Activated naive CD4-positive, alpha-beta T cell treated with anti-CD3 and anti-CD28 coated beads for 36 hours (primary cell): ENCODE measurements at regions of chr11 and their contacts with region 1.

Region 1: DNA sequence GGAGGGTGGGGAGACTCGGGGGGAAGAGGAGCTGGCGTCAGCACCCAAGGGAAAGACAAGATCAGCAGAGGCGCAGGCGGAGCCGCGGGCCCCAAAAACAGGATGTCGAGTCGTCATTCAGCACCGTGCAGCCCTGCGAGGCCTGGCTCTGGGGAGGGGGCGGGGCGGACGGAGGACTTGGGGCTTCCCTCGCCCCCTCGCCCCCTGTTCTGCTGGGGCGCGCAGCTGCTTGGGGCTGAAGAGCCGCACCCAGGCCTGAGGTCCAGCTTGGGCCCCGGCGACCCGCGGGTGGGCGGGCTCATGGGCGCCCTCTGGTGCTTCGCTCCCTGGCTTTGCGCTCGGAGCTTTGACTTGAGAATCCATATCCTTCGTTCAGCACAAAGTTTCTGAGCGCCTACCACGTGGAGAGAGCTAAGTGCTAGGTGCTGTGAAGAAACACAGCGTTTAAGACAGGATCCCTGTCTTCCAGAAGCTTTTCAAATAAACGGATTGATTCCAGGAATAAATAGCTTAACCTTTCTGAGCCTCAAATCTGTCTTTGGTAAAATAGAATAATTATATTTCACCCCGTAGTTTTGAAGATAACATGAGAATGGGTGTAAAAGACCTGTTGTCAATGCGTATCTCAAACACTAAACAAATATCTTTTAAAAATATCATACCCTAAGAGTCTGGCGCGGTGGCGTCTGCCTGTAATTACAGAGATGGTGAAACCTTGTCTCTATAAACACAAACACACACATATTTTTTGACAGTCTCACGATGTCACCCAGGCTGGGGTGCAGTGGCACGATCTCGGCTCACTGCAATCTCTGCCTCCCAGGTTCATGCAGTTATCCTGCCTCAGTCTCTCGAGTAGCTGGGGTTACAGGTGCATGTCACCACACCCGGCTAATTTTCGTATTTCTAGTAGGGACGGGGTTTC is 929 bp upstream of the RHOG start:
- DNase-seq: peak; percentile 98
- H3K4me3 Mint-ChIP-seq: peak overlapping the region; percentile 85
- H3K27ac Mint-ChIP-seq: peak overlapping the region; percentile 86
- H3K4me1 Mint-ChIP-seq: peaks cover 50% of the 10 kb centered on the region
- H3K27me3 Mint-ChIP-seq: no peaks in the 10 kb centered on the region

Region 2: GRCh38 chr11:3665336-3666022 is 176.2 kb before region 1 on chr11:
- CTCF ChIA-PET with region 1: no interaction called
- intact Hi-C with region 1: no loop called
- DNase-seq: no peak
- H3K4me3 Mint-ChIP-seq: no peak overlapping the region
- H3K27ac Mint-ChIP-seq: no peak overlapping the region
- H3K4me1 Mint-ChIP-seq: no peaks in the 10 kb centered on the region
- H3K27me3 Mint-ChIP-seq: no peaks in the 10 kb centered on the region

Region 3: DNA sequence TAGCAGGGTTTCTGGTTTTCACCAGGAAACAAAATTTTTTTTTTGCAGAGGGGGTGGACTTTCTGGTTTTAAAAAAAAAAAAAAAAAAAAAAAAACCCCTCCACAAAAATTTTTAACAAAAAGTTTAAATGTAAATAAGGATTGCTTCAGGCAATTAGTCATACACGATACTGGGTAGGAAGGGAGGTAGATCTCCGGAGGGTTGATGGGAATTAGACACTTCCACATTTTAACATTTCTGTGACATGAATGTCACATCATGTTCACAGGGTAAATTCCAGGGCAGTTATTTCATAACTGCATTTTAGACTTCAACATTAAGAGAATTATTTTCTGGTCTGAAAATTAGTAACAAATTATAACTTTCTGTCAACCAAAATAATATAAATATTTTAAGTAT is 60.3 kb before region 1 on chr11:
- CTCF ChIA-PET with region 1: no interaction called
- intact Hi-C with region 1: loop called (anchors 1 kb)
- DNase-seq: no peak
- H3K4me3 Mint-ChIP-seq: no peak overlapping the region
- H3K27ac Mint-ChIP-seq: peak overlapping the region; percentile 68
- H3K4me1 Mint-ChIP-seq: peaks cover 45% of the 10 kb centered on the region
- H3K27me3 Mint-ChIP-seq: no peaks in the 10 kb centered on the region

Region 4: GRCh38 chr11:3824714-3825472 is 16.8 kb before region 1 on chr11:
- CTCF ChIA-PET with region 1: interaction called, 11 read pairs
- intact Hi-C with region 1: loop called (anchors 1 kb)
- DNase-seq: peak; percentile 90
- H3K4me3 Mint-ChIP-seq: no peak overlapping the region
- H3K27ac Mint-ChIP-seq: peak overlapping the region; percentile 76
- H3K4me1 Mint-ChIP-seq: peaks cover 21% of the 10 kb centered on the region
- H3K27me3 Mint-ChIP-seq: no peaks in the 10 kb centered on the region

Region 5: GRCh38 chr11:3984896-3985295 is 143.2 kb after region 1 on chr11:
- CTCF ChIA-PET with region 1: no interaction called
- intact Hi-C with region 1: loop called (anchors 1 kb)
- DNase-seq: peak; percentile 80
- H3K4me3 Mint-ChIP-seq: no peak overlapping the region
- H3K27ac Mint-ChIP-seq: peak overlapping the region; percentile 55
- H3K4me1 Mint-ChIP-seq: peaks cover 74% of the 10 kb centered on the region
- H3K27me3 Mint-ChIP-seq: no peaks in the 10 kb centered on the region

Region 6: DNA sequence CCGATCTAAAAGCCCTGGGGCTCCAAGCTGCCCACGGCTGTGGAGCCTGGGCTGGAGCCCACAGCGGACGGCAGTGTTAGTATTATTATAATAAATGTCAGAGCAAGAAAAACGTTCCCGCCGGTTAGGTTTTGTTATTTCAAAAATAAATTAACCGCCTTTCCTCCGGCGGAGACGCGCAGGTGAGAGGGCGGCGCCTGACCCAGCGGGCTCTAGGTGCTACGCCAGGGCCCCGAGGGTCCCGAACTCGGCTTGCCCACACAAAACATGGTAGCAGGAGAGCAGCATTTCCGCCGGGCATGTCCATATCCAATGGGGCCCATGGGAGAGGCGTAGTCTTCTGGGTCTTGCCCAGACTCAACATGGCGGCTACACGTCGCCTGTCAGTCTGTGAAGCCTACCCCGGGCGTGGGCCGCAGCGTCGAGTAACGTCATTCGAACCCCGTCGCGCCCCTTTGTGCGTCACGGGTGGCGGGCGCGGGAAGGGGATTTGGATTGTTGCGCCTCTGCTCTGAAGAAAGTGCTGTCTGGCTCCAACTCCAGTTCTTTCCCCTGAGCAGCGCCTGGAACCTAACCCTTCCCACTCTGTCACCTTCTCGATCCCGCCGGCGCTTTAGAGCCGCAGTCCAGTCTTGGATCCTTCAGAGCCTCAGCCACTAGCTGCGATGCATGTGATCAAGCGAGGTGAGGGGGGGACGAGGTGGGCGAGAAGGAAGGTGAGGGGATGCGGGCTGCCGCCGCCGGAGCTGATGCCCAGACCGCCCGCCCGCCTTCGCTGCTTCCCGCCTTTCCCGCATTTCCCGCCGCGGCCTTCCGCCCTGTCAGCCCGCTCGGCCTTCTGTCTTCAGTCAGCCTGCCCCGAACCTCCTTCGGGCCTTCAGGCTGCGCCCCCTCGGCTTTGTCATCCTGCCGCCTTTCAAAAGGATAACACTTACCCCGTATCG is 252.9 kb after region 1 on chr11 and contains the start of gene RRM1:
- CTCF ChIA-PET with region 1: interaction called, 3 read pairs
- intact Hi-C with region 1: loop called (anchors 1 kb)
- DNase-seq: peak; percentile 96
- H3K4me3 Mint-ChIP-seq: peak within 1 kb of the TSS; percentile 98
- H3K27ac Mint-ChIP-seq: peak within 1 kb of the TSS; percentile 97
- H3K4me1 Mint-ChIP-seq: peaks cover 73% of the 10 kb centered on the region
- H3K27me3 Mint-ChIP-seq: no peaks in the 10 kb centered on the region
- total RNA-seq, gene RRM1: 296 to 311 TPM